ENCODE measurements at regions of chr11 and their contacts with region 1.

Region 1: GRCh38 chr11:76318744-76319384 is 62.1 kb downstream of the THAP12 start:
- DNase-seq: peak; percentile 91
- ATAC-seq: peak; percentile 90

Region 2: DNA sequence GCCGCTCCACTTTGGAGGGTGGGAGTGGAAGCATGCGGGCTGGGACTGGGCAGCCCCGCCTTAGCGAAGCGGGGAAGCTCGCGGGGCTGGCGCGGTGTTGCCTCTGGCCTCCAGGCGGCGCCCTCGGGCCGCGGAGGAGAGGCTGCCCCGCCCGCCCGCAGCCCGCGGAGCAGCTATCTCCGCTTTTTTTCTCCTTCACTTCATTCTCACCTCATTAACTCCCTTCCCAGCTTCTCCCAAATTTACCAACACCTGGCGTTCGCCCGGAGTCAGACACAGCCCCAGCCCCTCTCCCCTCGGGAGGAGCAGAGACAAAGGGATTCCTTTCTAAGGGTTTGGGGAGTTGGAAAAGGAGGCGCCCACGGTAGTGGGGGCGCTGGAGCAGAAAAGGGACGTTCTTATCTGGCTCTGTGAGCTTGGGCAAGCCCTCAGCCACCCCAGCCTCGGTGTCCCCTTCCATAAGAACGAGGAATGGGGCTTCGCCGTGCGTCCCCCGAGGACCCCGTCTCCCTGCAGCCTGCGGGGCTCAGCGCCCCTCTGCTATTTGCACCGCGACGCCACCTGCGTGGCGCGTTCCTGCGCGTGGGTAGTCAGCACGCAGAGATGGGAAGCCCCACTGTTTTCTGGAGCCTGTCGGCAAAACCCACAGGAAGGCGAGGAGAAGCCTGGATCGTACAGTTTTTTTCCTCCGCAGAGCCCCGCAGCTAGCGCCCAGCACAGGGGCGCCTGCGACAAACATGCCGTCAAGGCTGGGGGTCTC is 111.0 kb before region 1 on chr11:
- intact Hi-C with region 1: loop called (anchors 5 kb)
- DNase-seq: peak; percentile 90
- ATAC-seq: peak; percentile 84